ENCODE measurements at regions of chr3 and their contacts with region 1.

Region 1: GRCh38 chr3:62873761-62874647 is 1.2 kb downstream of the CADPS start:
- DNase-seq: peak; percentile 64 to 76 (median 72)
- ATAC-seq: peak; percentile 90
- H3K4me3 ChIP-seq: peak overlapping the region; percentile 11
- H3K4me1 ChIP-seq: peaks cover 10% of the 10 kb centered on the region
- CTCF ChIP-seq: peak; percentile 10

Region 2: DNA sequence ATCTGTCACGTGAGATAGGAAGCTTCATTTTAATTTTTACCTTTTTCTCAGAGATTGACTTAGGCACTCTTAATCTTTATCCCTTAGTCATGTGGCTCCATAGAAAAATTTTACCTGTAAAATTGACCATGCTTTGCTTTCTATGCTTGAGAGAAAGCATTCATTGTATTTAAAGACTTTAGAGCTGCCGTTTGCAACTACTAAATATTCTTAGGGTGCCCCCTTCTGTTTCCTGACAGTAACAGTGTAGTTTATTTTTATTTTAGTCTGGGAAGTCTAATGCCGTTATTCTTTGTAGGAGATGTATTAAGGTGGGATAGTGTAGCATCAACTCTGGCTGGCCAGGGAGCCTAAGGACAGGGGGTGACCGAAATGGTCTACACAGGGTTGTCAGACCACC is 319.6 kb after region 1 on chr3:
- intact Hi-C with region 1: loop called in 1 of 2 experiments (anchors 5 kb)
- DNase-seq: peak in 1 of 3 donors; percentile 16
- ATAC-seq: peak; percentile 61
- H3K4me3 ChIP-seq: no peak overlapping the region
- H3K4me1 ChIP-seq: no peaks in the 10 kb centered on the region
- CTCF ChIP-seq: no peak